ENCODE measurements at regions of chr1 and their contacts with region 1.

Region 1: GRCh38 chr1:27603681-27604578 is at the start of gene AHDC1:
- DNase-seq: peak; percentile 91
- H3K4me3 Mint-ChIP-seq: peak within 1 kb of the TSS; percentile 85
- H3K27ac Mint-ChIP-seq: peak within 1 kb of the TSS; percentile 57
- H3K4me1 Mint-ChIP-seq: peaks cover 39% of the 10 kb centered on the region
- H3K27me3 Mint-ChIP-seq: no peaks in the 10 kb centered on the region
- total RNA-seq, gene AHDC1: 7.7 to 10.1 TPM

Region 2: GRCh38 chr1:27392096-27392777 is 211.7 kb before region 1 on chr1 and contains the start of gene GPR3:
- CTCF ChIA-PET with region 1: interaction called, 12 read pairs
- intact Hi-C with region 1: loop called (anchors 1 kb)
- DNase-seq: peak; percentile 95
- H3K4me3 Mint-ChIP-seq: peak within 1 kb of the TSS; percentile 95
- H3K27ac Mint-ChIP-seq: peak within 1 kb of the TSS; percentile 75
- H3K4me1 Mint-ChIP-seq: peaks cover 19% of the 10 kb centered on the region
- H3K27me3 Mint-ChIP-seq: no peaks in the 10 kb centered on the region
- total RNA-seq, gene GPR3: 0.64 to 0.74 TPM

Region 3: DNA sequence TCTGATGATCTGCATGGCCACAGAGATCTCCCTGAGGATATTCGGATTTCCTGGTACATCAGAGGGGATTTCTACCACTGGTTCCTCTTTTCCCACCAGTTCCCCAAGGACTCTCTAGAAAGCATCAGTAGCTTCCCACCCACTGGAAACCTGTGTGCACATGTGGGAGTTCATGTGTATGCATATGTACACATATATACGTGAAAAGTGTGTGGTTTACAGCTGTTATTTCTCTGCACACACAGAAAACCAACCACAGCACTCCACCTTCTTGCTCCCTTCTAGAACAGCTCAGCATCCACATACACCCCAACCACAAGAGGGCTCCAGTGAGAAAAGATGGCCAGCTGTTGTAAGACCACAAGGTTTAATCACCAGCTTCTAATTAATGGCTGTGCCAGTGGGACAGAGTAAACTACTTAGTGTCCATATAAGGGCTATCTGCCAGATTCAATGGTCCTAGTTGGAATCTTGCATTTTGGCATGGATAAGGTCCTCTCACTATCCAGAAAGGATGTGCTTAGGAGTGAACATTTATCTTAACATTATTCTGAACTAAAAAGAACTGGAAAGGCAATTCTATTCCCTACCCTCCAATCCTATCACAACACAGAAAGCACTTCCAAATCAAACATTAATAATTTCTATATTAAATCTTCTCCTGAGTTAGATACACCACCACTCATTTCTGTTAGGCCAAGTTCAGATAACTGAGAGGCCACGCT is 187.4 kb before region 1 on chr1:
- CTCF ChIA-PET with region 1: interaction called, 29 read pairs
- intact Hi-C with region 1: loop called (anchors 1 kb)
- DNase-seq: peak; percentile 72
- H3K4me3 Mint-ChIP-seq: no peak overlapping the region
- H3K27ac Mint-ChIP-seq: no peak overlapping the region
- H3K4me1 Mint-ChIP-seq: peaks cover 38% of the 10 kb centered on the region
- H3K27me3 Mint-ChIP-seq: no peaks in the 10 kb centered on the region

Region 4: GRCh38 chr1:27556781-27557595 is 46.9 kb before region 1 on chr1:
- CTCF ChIA-PET with region 1: interaction called, 105 read pairs
- intact Hi-C with region 1: loop called (anchors 1 kb)
- DNase-seq: peak; percentile 86
- H3K4me3 Mint-ChIP-seq: no peak overlapping the region
- H3K27ac Mint-ChIP-seq: peak overlapping the region; percentile 6
- H3K4me1 Mint-ChIP-seq: peaks cover 21% of the 10 kb centered on the region
- H3K27me3 Mint-ChIP-seq: no peaks in the 10 kb centered on the region

Region 5: GRCh38 chr1:27618341-27619082 is 14.6 kb after region 1 on chr1:
- CTCF ChIA-PET with region 1: interaction called, 10 read pairs
- intact Hi-C with region 1: no loop called
- DNase-seq: peak; percentile 51
- H3K4me3 Mint-ChIP-seq: no peak overlapping the region
- H3K27ac Mint-ChIP-seq: peak overlapping the region; percentile 48
- H3K4me1 Mint-ChIP-seq: peaks cover 50% of the 10 kb centered on the region
- H3K27me3 Mint-ChIP-seq: no peaks in the 10 kb centered on the region

Region 6: GRCh38 chr1:27772933-27773825 is 169.2 kb after region 1 on chr1 and contains the start of gene STX12:
- CTCF ChIA-PET with region 1: interaction called, 3 read pairs
- intact Hi-C with region 1: loop called (anchors 5 kb)
- DNase-seq: peak; percentile 100
- H3K4me3 Mint-ChIP-seq: peak within 1 kb of the TSS; percentile 90
- H3K27ac Mint-ChIP-seq: peak within 1 kb of the TSS; percentile 97
- H3K4me1 Mint-ChIP-seq: peaks cover 31% of the 10 kb centered on the region
- H3K27me3 Mint-ChIP-seq: no peaks in the 10 kb centered on the region
- total RNA-seq, gene STX12: 31.9 to 35.7 TPM